Panc1 (cell line): ENCODE measurements at regions of chr17 and their contacts with region 1.

Region 1: GRCh38 chr17:62366189-62366588 is 14.2 kb upstream of the EFCAB3 start:
- DNase-seq: no peak
- ATAC-seq: no peak
- H3K4me3 ChIP-seq: no peak overlapping the region
- H3K27ac ChIP-seq: no peak overlapping the region
- H3K4me1 ChIP-seq: no peaks in the 10 kb centered on the region
- H3K27me3 ChIP-seq: peaks cover 16% of the 10 kb centered on the region
- CTCF ChIP-seq: no peak

Region 2: GRCh38 chr17:62321451-62321850 is 44.7 kb before region 1 on chr17:
- CTCF ChIA-PET with region 1: no interaction called
- POLR2A ChIA-PET with region 1: no interaction called
- in situ Hi-C with region 1: no loop called
- intact Hi-C with region 1: no loop called
- DNase-seq: no peak
- ATAC-seq: no peak
- H3K4me3 ChIP-seq: no peak overlapping the region
- H3K27ac ChIP-seq: no peak overlapping the region
- H3K4me1 ChIP-seq: no peaks in the 10 kb centered on the region
- H3K27me3 ChIP-seq: peaks cover 36% of the 10 kb centered on the region
- CTCF ChIP-seq: no peak

Region 3: GRCh38 chr17:62343764-62344270 is 22.4 kb before region 1 on chr17:
- CTCF ChIA-PET with region 1: no interaction called
- POLR2A ChIA-PET with region 1: interaction called, 15 read pairs
- in situ Hi-C with region 1: no loop called
- intact Hi-C with region 1: no loop called
- DNase-seq: no peak
- ATAC-seq: no peak
- H3K4me3 ChIP-seq: no peak overlapping the region
- H3K27ac ChIP-seq: no peak overlapping the region
- H3K4me1 ChIP-seq: no peaks in the 10 kb centered on the region
- H3K27me3 ChIP-seq: no peaks in the 10 kb centered on the region; the same call in 1 of the 2 replicates
- CTCF ChIP-seq: no peak

Region 4: DNA sequence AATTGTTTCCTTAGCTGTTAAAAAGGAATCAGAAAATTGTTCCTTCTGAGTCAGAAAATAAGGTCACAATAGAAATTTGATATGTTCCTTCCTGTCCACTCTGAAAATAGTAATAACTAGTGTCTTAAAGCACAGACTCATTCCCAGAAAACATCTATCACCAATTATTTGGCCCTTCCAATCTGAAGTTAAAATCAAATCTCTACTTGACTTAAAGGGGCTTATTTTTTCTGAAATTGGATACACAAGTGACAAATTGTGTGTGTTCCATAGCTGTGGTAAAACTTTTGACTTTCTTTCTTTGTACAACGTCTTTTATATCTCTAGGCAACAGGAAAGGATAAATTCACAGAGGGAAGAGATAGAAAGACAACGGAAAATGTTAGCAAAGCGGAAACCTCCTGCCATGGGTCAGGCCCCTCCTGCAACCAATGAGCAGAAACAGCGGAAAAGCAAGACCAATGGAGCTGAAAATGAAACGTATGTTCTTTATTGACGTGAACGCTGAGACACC is 206.8 kb after region 1 on chr17:
- CTCF ChIA-PET with region 1: no interaction called
- POLR2A ChIA-PET with region 1: no interaction called
- in situ Hi-C with region 1: no loop called
- intact Hi-C with region 1: no loop called
- DNase-seq: no peak
- ATAC-seq: no peak
- H3K4me3 ChIP-seq: no peak overlapping the region
- H3K27ac ChIP-seq: no peak overlapping the region
- H3K4me1 ChIP-seq: no peaks in the 10 kb centered on the region
- H3K27me3 ChIP-seq: no peaks in the 10 kb centered on the region
- CTCF ChIP-seq: no peak